ENCODE measurements at regions of chr2 and their contacts with region 1.

Region 1: GRCh38 chr2:57947398-57947797 is 99.2 kb upstream of the VRK2 start:
- DNase-seq: no peak
- H3K4me3 ChIP-seq: no peak overlapping the region
- H3K27ac ChIP-seq: no peak overlapping the region
- H3K4me1 ChIP-seq: no peaks in the 10 kb centered on the region; a peak in 1 of 4 replicates
- H3K27me3 ChIP-seq: no peaks in the 10 kb centered on the region
- CTCF ChIP-seq: no peak
- EP300 ChIP-seq: no peak
- RAD21 ChIP-seq: peak; percentile 45; the same call in 1 of the 2 replicates

Region 2: GRCh38 chr2:57759822-57760300 is 187.5 kb before region 1 on chr2:
- CTCF ChIA-PET with region 1: interaction called, 10 read pairs
- POLR2A ChIA-PET with region 1: no interaction called
- DNase-seq: peak; percentile 76
- H3K4me3 ChIP-seq: peak overlapping the region; percentile 26 to 38; a peak in 2 of 4 replicates
- H3K27ac ChIP-seq: no peak overlapping the region
- H3K4me1 ChIP-seq: peaks cover 0 to 2% of the 10 kb centered on the region in 2 experiments; a peak in 1 of 4 replicates
- H3K27me3 ChIP-seq: no peaks in the 10 kb centered on the region
- CTCF ChIP-seq: peak; percentile 92
- EP300 ChIP-seq: no peak
- RAD21 ChIP-seq: peak; percentile 93

Region 3: GRCh38 chr2:57973621-57974186 is 26.3 kb after region 1 on chr2:
- CTCF ChIA-PET with region 1: no interaction called
- POLR2A ChIA-PET with region 1: no interaction called
- DNase-seq: no peak
- H3K4me3 ChIP-seq: no peak overlapping the region
- H3K27ac ChIP-seq: no peak overlapping the region
- H3K4me1 ChIP-seq: no peaks in the 10 kb centered on the region
- H3K27me3 ChIP-seq: no peaks in the 10 kb centered on the region
- CTCF ChIP-seq: no peak
- EP300 ChIP-seq: no peak
- RAD21 ChIP-seq: no peak

Measured in SK-N-SH (cell line).